ENCODE measurements at regions of chr11 and their contacts with region 1.

Region 1: DNA sequence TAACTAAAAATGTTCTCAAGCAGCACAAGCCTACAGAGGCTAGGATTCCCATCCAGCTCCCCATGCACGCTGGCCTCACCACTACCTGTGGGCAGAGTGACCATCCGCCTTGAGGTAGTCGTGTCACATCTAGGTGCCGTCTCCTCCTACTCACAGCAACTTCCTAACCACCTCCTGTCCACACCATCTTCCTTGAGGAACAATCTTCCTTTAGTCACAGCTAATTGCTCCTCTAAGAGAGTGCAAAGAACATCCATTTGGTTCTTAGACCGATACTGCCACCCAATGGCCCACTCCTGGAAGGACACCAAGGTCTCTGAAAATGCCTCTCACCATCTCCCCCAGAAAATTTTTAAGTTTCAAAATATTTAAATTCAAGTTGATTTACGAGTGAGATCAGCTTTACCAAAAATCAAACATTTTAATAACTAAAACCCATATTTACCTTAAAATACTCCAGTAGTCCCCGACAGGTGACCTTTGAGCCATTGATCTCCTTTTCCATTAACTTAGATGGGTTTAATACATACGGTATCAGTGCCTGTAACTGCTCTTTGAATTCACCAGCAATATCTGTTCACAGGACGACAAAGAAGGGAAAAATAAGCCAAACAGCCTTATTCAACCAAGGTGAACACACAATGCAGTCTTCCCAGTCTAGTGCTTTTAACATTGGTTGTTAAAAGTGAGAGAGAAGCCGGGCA is 21.7 kb upstream of the PLAAT3 start:
- DNase-seq: peak; percentile 67
- CTCF ChIP-seq: peak; percentile 76

Region 2: DNA sequence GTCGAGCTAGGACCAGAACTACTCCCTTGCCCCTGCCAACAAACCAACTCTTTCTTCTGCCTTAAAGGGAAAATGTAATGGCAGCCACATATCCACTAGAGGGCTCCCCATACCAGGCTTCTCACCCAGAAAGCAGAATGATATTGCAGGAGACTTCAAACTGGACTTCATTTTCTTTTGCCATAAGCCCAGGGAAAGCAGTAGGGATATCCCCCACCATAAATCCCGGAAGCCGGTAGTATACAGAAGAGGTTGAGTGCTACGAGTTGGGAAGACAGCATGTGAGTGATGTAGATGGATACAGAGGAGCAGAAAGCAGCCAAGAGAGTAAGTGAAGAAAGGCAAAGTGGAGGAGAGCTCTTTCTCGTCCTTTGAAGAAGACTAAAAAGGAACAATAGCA is 157.0 kb before region 1 on chr11:
- in situ Hi-C with region 1: loop called (anchors 5 kb)
- DNase-seq: peak; percentile 81
- CTCF ChIP-seq: peak; percentile 81